ENCODE measurements at regions of chr2 and their contacts with region 1.

Region 1: DNA sequence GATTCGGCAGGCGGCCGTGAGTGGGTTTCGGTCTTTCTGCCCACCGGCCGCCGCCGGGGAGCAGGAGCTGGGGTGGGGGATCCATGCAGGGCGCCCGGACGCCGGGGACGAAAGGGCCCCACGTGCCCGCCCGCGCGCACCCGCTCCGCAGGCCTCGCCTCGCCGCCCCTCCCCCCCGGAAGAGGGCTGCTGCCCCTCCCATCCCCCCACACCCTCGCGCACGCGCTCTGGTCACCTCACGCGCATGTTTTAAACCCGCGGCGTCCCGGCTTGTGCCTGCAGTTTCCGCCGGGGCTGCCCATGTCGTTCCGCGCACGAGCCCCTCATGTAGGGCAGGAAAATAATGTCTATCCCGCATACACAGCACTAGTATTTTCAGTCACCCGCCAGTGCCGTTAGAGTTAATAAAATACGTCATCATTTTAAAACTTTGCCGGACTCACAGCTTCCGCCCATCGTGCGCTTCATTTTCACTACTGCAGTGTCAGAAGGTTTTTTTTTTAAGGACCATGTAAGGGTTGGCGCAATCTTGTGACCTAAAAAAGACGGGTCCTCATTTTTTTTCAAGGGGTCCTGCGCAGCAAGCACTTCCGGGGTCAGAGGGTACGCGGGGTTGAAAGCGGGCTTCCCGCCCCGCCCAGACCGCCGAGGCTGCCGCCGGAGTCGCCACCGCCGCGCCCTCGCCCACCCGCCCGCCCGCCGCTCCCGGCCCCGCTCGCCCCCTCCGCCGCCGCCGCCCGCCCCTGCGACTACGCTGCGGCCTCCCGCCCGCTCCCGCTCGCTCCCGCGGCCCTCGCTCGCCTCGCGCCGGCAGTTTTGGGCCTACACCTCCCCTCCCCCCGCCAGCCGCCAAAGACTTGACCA is at the start of gene PCBP1:
- DNase-seq: peak; percentile 94 to 100 (median 98)
- ATAC-seq: peak; percentile 83
- H3K4me3 ChIP-seq: peak within 1 kb of the TSS; percentile 86
- H3K4me3 Mint-ChIP-seq: peak within 1 kb of the TSS; percentile 91 to 98 (median 97)
- H3K27ac ChIP-seq: peak within 1 kb of the TSS; percentile 100
- H3K27ac Mint-ChIP-seq: peak within 1 kb of the TSS; percentile 99 to 100 (median 100)
- H3K4me1 ChIP-seq: peaks cover 55 to 59% of the 10 kb centered on the region in 2 donors
- H3K4me1 Mint-ChIP-seq: peaks cover 40 to 67% (median 59%) of the 10 kb centered on the region in 7 donors
- H3K27me3 ChIP-seq: no peaks in the 10 kb centered on the region
- H3K27me3 Mint-ChIP-seq: peaks cover 0 to 4% (median 0%) of the 10 kb centered on the region in 5 donors
- total RNA-seq, gene PCBP1: 257 to 487 (median 368) TPM

Region 2: DNA sequence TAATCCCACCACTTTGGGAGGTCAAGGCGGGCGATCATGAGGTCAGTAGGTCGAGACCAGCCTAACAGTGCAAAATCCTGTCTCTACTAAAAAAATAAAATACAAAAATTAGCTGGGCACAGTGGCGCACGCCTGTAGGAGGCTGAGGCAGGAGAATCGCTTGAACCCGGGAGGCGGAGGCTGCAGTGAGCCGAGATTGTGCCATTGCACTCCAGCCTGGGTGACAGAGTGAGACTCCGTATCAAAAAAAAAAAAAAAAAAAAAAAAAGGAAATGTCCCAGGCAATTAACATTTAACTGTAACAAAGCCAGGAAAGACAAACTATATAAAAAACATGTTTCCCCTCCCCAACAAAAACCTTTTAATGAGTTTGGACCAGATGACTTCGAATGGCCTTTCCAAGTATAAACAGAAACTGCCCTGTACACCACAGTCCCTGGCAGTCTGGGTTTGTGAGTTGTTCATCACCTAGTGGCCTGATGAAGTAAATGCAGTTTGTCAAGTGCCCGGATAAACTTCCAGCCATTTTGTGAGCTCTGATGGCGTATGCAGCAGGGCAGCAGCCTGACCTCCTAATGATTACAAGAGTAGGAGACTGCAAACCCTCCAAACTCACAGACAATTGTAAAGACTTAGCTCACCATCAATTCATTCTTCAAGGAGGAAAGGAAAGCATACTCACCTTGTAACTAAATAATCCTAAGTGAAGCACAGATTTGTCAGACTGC is 16.4 kb before region 1 on chr2:
- CTCF ChIA-PET with region 1: interaction called, 32 read pairs
- POLR2A ChIA-PET with region 1: interaction called, 450 read pairs
- intact Hi-C with region 1: loop called (anchors 1 kb)
- DNase-seq: peak in 8 of 9 donors; percentile 49 to 80 (median 70)
- ATAC-seq: peak; percentile 85
- H3K4me3 ChIP-seq: peak overlapping the region; percentile 48
- H3K4me3 Mint-ChIP-seq: peak overlapping the region; percentile 56 to 91 (median 80)
- H3K27ac ChIP-seq: peak overlapping the region; percentile 71
- H3K27ac Mint-ChIP-seq: peak overlapping the region; percentile 89 to 99 (median 95)
- H3K4me1 ChIP-seq: peaks cover 35 to 36% of the 10 kb centered on the region in 2 donors
- H3K4me1 Mint-ChIP-seq: peaks cover 19 to 72% (median 63%) of the 10 kb centered on the region in 7 donors
- H3K27me3 ChIP-seq: no peaks in the 10 kb centered on the region
- H3K27me3 Mint-ChIP-seq: no peaks in the 10 kb centered on the region

Region 3: DNA sequence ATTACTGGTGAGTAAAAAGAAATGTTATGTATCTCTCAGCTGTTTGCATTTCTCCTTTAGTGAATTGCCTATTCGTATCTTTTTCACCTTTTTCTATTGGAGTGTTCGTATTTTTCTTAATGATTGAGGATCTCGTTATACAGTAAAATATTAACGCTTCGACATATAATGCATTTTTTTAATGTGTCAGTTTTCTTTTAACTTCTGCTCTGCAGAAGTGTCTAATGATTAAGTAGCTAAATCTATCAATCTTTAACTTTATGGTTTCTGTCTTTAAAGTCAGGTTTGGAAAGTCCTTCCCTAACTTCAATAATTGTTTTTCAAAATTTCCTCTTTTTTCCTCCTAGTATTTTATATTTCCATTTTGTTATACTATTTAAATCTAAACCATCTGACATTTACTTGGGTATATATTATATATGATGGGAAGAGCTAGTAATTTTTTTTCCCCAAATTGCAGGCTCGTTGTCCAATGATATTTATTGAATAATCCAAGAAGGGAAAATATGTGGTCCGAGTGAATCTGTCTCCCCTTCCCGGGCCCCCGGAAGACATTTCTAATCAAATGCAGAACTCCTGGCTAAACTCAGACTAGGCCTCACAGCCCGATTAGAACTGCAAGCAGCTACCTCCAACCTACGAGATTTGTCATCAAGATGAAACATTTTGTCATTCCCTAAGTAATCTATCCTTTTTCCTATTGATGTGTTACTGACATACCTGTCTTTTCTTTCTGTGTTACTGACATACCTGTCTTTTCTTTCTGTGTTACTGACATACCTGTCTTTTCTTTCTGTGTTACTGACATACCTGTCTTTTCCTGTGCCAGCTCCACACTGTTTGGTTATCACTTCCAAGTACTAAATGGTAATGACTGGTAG is 17.4 kb after region 1 on chr2:
- CTCF ChIA-PET with region 1: interaction called, 7 read pairs
- POLR2A ChIA-PET with region 1: interaction called, 535 read pairs
- intact Hi-C with region 1: loop called (anchors 1 kb)
- DNase-seq: peak in 4 of 9 donors; percentile 35 to 47 (median 46)
- ATAC-seq: no peak
- H3K4me3 ChIP-seq: peak overlapping the region; percentile 35
- H3K4me3 Mint-ChIP-seq: peak overlapping the region; percentile 60 to 87 (median 82)
- H3K27ac ChIP-seq: peak overlapping the region; percentile 72
- H3K27ac Mint-ChIP-seq: peak overlapping the region; percentile 88 to 97 (median 93)
- H3K4me1 ChIP-seq: peaks cover 37 to 45% of the 10 kb centered on the region in 2 donors
- H3K4me1 Mint-ChIP-seq: peaks cover 34 to 58% (median 55%) of the 10 kb centered on the region in 7 donors
- H3K27me3 ChIP-seq: no peaks in the 10 kb centered on the region
- H3K27me3 Mint-ChIP-seq: no peaks in the 10 kb centered on the region

Region 4: DNA sequence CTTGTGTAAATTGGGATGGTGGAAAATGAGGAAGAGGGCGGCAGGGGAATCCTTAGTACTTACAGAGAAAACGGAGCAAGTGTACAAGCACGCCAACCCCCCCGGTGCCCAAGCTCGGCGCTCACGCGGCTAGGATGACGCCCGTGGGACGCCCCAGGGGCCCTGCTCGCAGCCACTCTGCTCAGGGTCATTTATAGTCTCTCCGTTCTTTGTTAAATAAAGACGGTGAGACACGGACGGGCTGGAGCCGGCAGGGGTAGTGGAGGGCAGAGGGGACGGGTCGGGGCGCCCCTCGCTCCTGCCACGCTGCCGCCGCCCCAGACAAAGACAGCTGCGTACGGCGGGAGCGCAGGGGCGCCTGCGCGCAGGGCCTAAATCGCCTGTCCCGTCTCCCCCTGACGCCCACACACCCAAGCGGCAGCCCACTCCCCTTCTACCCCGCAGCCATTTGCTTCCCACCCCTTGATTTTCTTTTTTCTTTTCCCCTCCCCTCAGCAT is 38.0 kb after region 1 on chr2:
- CTCF ChIA-PET with region 1: interaction called, 8 read pairs
- POLR2A ChIA-PET with region 1: interaction called, 1,973 read pairs
- intact Hi-C with region 1: loop called (anchors 1 kb)
- DNase-seq: peak in 6 of 9 donors; percentile 59 to 74 (median 70)
- ATAC-seq: peak; percentile 74
- H3K4me3 ChIP-seq: peak overlapping the region; percentile 92
- H3K4me3 Mint-ChIP-seq: peak overlapping the region; percentile 84 to 99 (median 96)
- H3K27ac ChIP-seq: peak overlapping the region; percentile 97
- H3K27ac Mint-ChIP-seq: peak overlapping the region; percentile 96 to 100 (median 99)
- H3K4me1 ChIP-seq: peaks cover 52 to 54% of the 10 kb centered on the region in 2 donors
- H3K4me1 Mint-ChIP-seq: peaks cover 46 to 82% (median 70%) of the 10 kb centered on the region in 7 donors
- H3K27me3 ChIP-seq: no peaks in the 10 kb centered on the region
- H3K27me3 Mint-ChIP-seq: no peaks in the 10 kb centered on the region

Region 5: DNA sequence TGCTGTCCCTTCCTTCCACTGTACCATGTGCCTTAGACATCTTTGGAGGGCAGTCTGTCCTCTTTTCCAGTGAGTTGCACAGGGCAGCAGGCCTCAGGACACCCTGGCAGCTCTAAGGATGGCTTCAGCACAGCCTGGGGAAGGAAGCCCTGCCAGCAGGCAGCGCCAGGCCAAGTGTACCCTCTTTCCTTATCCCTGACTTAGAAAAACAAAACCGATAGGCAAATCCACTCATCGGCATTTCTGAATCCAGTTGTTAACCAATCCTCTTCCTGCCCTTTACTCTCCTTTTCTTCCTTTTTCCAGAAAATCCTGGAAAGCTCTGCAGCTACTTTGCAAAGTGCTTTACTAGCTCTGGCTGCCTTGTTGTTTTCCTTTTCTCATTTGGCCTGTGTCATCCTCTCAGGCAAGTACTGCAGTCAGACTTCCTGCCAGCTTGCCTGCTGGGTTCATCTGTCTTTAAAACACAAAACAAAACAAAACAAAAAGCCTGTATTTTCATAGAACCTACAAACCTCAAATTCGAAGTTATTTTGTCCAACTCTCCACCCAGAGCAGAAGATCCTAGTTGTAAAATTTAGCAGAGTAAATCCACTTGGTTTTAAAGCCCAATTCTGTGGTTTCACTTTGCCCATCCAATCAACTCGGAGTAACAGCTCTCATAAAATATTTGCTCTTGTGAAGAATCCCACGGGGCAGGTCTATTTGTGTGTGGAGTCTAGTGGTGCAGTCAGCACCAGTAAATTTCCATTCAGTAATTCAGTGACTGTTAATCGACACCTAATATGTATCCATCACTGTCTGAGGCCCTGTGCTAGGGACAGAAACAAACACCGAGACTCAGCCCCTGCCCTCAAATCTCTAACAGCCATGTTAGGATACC is 45.4 kb after region 1 on chr2:
- CTCF ChIA-PET with region 1: interaction called, 30 read pairs
- POLR2A ChIA-PET with region 1: interaction called, 1,973 read pairs
- intact Hi-C with region 1: loop called (anchors 1 kb)
- DNase-seq: peak in 7 of 9 donors; percentile 63 to 77 (median 68)
- ATAC-seq: peak; percentile 66
- H3K4me3 ChIP-seq: peak overlapping the region; percentile 53
- H3K4me3 Mint-ChIP-seq: peak overlapping the region; percentile 81 to 94 (median 90)
- H3K27ac ChIP-seq: peak overlapping the region; percentile 85
- H3K27ac Mint-ChIP-seq: peak overlapping the region; percentile 95 to 99 (median 97)
- H3K4me1 ChIP-seq: peaks cover 66 to 74% of the 10 kb centered on the region in 2 donors
- H3K4me1 Mint-ChIP-seq: peaks cover 58 to 88% (median 79%) of the 10 kb centered on the region in 7 donors
- H3K27me3 ChIP-seq: no peaks in the 10 kb centered on the region
- H3K27me3 Mint-ChIP-seq: no peaks in the 10 kb centered on the region

Region 6: DNA sequence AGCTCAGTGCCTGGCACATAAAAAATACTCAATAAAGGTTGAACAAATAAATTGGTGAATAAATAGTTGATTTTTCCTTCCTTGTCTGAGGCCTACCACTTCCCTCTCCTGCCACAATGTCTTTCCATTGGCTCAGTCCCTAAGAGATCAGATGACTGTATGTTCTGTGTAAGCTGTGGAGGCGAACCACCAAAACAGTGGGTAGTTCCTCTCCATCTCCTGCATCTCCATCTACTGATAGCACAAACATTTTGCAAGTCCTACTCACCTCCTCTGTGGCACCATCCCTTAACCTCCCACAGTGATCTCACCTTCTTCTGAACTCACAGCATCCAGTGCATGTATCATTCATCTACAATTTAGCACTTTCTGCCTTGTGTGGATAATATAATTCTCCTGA is 50.4 kb after region 1 on chr2:
- CTCF ChIA-PET with region 1: interaction called, 30 read pairs
- POLR2A ChIA-PET with region 1: interaction called, 1,973 read pairs
- intact Hi-C with region 1: loop called (anchors 1 kb)
- DNase-seq: peak in 3 of 9 donors; percentile 29 to 54 (median 40)
- ATAC-seq: no peak
- H3K4me3 ChIP-seq: no peak overlapping the region
- H3K4me3 Mint-ChIP-seq: peak overlapping the region; percentile 39 to 94 (median 80)
- H3K27ac ChIP-seq: peak overlapping the region; percentile 67
- H3K27ac Mint-ChIP-seq: peak overlapping the region; percentile 90 to 99 (median 96)
- H3K4me1 ChIP-seq: peaks cover 71 to 78% of the 10 kb centered on the region in 2 donors
- H3K4me1 Mint-ChIP-seq: peaks cover 64 to 90% (median 81%) of the 10 kb centered on the region in 7 donors
- H3K27me3 ChIP-seq: no peaks in the 10 kb centered on the region
- H3K27me3 Mint-ChIP-seq: peaks cover 0 to under 1% (median 0%) of the 10 kb centered on the region in 5 donors

Measured in naive thymus-derived CD4-positive, alpha-beta T cell (primary cell).